Endothelial cell of umbilical vein (primary cell): ENCODE measurements at regions of chr1 and their contacts with region 1.

Region 1: DNA sequence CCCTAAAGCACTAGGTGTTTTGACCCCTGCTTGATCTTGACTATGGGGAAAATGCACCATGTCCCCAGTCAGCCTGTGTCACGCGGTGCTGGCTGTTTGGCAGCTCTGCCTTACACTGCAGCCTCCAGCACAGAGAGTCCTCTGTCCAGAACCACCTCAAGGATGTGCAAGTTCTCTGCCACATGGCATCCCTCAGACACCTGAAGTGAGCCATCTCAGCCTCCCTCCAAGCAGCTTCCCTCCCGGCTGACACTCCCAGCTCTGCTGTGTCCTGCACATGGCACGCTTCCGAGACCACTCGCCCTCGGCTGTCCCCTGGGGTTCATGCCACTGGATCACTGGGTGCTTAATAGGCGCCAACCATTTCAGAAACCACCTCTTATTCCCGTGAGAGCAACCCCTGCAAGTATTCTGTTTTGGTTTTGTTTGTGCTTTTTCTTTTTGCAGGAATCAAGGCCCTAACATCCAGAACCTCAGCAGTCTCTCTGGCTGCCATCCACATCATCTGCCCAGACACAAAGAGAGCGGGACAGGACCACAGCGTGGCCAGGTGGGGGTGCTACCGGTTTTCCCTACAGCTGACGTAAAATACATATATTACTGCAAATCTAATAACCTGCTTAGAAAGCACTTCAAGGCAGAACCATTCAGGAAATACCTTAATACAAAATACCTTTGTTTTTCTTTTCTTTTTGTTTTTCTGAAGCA is 45.7 kb downstream of the CAPZB start:
- DNase-seq: peak; percentile 33
- H3K4me3 ChIP-seq: no peak overlapping the region
- H3K27ac ChIP-seq: no peak overlapping the region
- H3K4me1 ChIP-seq: peaks cover 52% of the 10 kb centered on the region
- H3K27me3 ChIP-seq: no peaks in the 10 kb centered on the region
- CTCF ChIP-seq: peak in 1 of 2 donors; percentile 26
- POLR2A ChIP-seq: no peak

Region 2: DNA sequence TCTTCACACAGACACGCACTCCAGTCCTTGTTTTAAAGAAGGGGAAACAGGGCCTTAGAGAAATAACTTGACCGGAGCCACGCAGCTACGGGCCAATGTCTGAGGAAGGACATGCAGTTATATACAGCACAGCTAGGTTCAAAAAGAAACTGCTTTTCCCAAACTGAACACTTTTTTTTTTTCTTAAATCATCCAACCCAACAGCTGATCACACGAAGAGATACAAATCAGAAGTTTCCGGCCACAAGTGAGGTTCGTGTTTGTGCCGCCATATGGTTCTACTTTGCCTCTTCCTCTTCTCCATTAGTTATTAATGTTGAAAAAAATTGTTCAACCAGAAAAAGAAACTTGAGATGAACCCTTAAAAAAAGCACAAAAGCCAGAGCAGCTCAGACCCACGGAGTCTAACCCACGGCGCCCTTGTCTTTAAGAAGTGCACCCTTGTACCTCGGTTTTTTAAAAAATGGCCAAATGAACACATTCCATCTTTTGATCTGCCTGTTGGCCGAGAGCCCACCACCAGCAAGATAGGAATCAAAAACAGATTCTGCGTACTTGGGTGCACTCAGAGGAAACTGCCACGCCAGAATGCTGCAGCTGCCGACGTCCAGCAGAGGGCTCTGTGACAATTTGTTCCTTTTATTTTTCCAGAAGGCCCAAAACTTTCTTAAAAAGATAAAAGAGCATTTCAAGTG is 48.6 kb before region 1 on chr1:
- CTCF ChIA-PET with region 1: interaction called, 5 read pairs
- POLR2A ChIA-PET with region 1: no interaction called
- dilution Hi-C with region 1: no loop called
- intact Hi-C with region 1: loop called (anchors 2 kb)
- DNase-seq: peak; percentile 82
- H3K4me3 ChIP-seq: no peak overlapping the region
- H3K27ac ChIP-seq: peak overlapping the region; percentile 52
- H3K4me1 ChIP-seq: peaks cover 21% of the 10 kb centered on the region
- H3K27me3 ChIP-seq: no peaks in the 10 kb centered on the region
- CTCF ChIP-seq: peak; percentile 84 to 86
- POLR2A ChIP-seq: no peak

Region 3: GRCh38 chr1:19468397-19468956 is 28.9 kb after region 1 on chr1:
- CTCF ChIA-PET with region 1: interaction called, 3 read pairs
- POLR2A ChIA-PET with region 1: no interaction called
- dilution Hi-C with region 1: no loop called
- intact Hi-C with region 1: loop called (anchors 2 kb)
- DNase-seq: no peak
- H3K4me3 ChIP-seq: no peak overlapping the region
- H3K27ac ChIP-seq: peak overlapping the region; percentile 60
- H3K4me1 ChIP-seq: peaks cover 20% of the 10 kb centered on the region
- H3K27me3 ChIP-seq: no peaks in the 10 kb centered on the region
- CTCF ChIP-seq: no peak
- POLR2A ChIP-seq: no peak

Region 4: DNA sequence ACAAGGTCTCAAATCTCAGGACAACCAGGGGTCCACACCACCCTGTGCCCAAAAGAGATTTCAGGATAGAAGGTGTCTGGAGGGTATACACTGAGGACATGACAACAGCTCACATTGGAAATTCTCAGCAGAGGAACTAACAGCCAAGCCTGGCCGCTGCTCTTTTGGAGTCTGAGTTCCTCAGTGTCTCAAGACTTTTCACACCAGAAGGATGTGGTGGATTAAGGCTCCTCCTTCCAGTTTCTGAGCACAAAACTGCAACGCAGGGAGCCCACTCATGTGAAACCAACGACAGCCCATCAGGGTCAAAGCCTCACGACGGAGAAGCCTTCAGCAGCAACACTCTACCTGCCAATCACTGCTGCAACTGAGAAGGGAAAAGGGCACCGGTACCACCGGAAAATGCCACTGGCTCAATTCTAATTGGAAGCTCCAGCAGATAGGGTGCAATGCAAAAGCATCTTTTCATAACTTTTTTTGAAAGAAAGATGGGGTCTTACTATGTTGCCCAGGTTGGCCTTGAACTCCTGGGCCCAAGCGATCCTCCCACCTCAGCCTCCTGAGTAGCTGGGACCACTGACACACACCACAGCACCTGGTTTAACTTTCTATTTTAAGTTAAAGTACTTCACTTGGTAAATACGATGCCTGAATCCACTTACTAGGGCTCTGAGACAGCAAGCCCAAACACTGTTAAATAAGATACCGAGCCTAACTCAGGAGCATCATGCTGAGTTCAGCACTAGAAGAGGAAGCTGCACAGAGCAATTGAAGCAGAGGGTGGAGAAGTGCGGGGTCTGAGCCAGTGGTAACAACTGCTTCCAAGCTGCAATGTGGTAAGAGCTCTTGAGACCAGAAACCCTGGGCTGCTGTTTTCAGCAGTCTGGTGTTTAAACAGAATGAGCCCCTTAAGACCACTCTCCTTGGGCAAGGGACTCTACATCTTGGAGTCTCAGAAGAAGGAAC is 37.9 kb after region 1 on chr1:
- CTCF ChIA-PET with region 1: interaction called, 3 read pairs
- POLR2A ChIA-PET with region 1: interaction called, 3 read pairs
- dilution Hi-C with region 1: no loop called
- intact Hi-C with region 1: loop called (anchors 2 kb)
- DNase-seq: peak; percentile 43
- H3K4me3 ChIP-seq: no peak overlapping the region
- H3K27ac ChIP-seq: peak overlapping the region; percentile 58
- H3K4me1 ChIP-seq: peaks cover 50% of the 10 kb centered on the region
- H3K27me3 ChIP-seq: no peaks in the 10 kb centered on the region
- CTCF ChIP-seq: no peak
- POLR2A ChIP-seq: no peak

Region 5: GRCh38 chr1:19582302-19582701 is 142.7 kb after region 1 on chr1:
- CTCF ChIA-PET with region 1: interaction called, 3 read pairs
- POLR2A ChIA-PET with region 1: no interaction called
- dilution Hi-C with region 1: no loop called
- intact Hi-C with region 1: loop called (anchors 5 kb)
- DNase-seq: peak; percentile 44
- H3K4me3 ChIP-seq: no peak overlapping the region
- H3K27ac ChIP-seq: no peak overlapping the region
- H3K4me1 ChIP-seq: no peaks in the 10 kb centered on the region
- H3K27me3 ChIP-seq: peaks cover 2 to 5% of the 10 kb centered on the region in 2 experiments
- CTCF ChIP-seq: peak; percentile 65 to 72
- POLR2A ChIP-seq: no peak

Region 6: GRCh38 chr1:19643602-19644394 is 204.2 kb after region 1 on chr1 and contains the start of gene NBL1:
- CTCF ChIA-PET with region 1: interaction called, 3 read pairs
- POLR2A ChIA-PET with region 1: no interaction called
- dilution Hi-C with region 1: no loop called
- intact Hi-C with region 1: loop called (anchors 2 kb)
- DNase-seq: peak; percentile 54
- H3K4me3 ChIP-seq: peak within 1 kb of the TSS; percentile 31 to 49 (median 31)
- H3K27ac ChIP-seq: no peak within 1 kb of the TSS
- H3K4me1 ChIP-seq: peaks cover 12% of the 10 kb centered on the region
- H3K27me3 ChIP-seq: peaks cover 0 to 1% of the 10 kb centered on the region in 2 experiments
- CTCF ChIP-seq: no peak
- POLR2A ChIP-seq: no peak
- total RNA-seq, gene NBL1: 39.8 and 40.5 TPM in 2 replicates

Region 7: DNA sequence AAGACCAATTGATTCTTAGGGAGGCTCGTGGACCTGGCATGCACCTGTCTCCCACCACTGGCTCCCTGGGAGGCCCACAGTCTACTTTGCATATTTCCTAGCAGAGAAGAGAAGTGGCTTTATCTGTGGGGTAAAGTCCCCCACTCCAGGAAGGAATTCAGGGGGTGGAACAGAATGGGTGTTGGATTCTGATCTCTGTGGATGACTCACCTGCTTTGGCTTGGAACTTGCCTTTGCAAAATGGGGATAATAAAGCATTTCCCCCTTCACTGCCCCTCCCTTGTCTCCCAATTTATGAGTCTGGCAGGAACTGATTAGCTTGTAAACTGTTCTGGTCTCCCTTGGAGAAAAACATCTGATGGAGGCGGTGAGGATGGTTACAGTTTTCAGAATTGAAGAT is 421.4 kb after region 1 on chr1:
- CTCF ChIA-PET with region 1: no interaction called
- POLR2A ChIA-PET with region 1: no interaction called
- dilution Hi-C with region 1: no loop called
- intact Hi-C with region 1: no loop called
- DNase-seq: no peak
- H3K4me3 ChIP-seq: no peak overlapping the region
- H3K27ac ChIP-seq: no peak overlapping the region
- H3K4me1 ChIP-seq: no peaks in the 10 kb centered on the region
- H3K27me3 ChIP-seq: peaks cover 6% of the 10 kb centered on the region in 2 experiments
- CTCF ChIP-seq: no peak
- POLR2A ChIP-seq: no peak